ENCODE measurements at regions of chr6 and their contacts with region 1.

Region 1: DNA sequence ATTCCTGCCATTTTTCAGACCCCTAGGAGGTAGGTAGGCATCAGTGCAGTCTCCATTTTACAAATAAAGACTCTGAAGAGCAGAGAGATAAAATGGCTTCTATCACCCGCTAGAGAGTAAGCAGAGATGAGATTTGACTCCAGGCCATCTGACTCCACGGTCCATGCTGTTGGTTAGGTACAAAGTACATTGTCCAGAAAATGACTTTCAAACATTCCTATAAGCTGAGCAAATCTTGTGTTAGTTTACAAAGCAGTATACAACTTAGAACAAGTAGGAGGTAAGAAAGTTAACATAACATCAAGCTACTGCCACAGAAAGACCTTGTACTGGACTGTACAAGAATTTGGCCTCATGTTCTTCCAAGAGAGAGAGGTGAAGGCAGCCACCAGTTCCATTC is 14.9 kb downstream of the BTN1A1 start:
- DNase-seq: no peak
- CTCF ChIP-seq: no peak

Region 2: DNA sequence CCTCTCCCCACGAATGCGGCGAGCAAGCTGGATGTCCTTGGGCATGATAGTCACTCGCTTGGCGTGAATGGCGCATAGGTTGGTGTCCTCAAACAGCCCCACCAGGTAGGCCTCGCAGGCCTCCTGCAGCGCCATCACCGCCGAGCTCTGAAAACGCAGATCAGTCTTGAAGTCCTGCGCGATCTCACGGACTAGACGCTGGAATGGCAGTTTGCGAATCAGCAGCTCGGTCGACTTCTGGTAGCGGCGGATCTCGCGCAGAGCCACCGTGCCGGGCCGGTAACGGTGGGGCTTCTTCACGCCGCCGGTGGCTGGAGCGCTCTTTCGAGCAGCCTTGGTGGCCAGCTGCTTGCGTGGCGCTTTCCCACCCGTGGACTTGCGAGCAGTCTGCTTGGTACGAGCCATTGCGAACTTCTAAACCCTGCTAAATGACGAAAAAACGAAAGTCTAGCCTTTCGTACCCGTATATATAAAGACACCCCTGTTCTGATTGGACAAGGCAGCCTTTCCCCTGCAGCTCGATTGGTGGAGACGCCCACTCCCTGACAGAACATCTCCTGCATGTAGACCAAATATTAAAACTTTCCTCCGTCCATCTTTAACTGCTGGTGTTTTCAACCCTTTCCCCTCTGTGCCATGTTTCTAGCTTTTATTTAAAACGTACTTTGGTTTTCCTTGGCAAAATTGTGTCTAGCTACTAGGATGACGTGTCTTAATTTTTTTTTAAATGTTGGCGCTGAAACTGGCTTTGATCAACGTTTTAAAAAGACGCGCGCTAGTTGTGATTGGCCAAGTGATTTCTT is 317.9 kb before region 1 on chr6:
- CTCF ChIA-PET with region 1: no interaction called
- POLR2A ChIA-PET with region 1: no interaction called
- DNase-seq: peak; percentile 87
- CTCF ChIP-seq: peak; percentile 11

Region 3: DNA sequence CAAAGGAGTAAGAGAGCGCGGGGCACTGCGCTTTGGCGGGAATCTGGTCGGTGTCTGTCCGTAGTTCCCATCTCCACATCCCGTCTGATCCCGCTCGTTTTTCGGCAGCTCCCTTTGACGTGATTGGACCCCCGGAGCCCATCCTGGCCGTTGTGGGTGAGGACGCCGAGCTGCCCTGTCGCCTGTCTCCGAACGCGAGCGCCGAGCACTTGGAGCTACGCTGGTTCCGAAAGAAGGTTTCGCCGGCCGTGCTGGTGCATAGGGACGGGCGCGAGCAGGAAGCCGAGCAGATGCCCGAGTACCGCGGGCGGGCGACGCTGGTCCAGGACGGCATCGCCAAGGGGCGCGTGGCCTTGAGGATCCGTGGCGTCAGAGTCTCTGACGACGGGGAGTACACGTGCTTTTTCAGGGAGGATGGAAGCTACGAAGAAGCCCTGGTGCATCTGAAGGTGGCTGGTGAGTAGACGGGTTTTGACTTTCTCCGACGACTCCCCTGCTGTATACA is 13.4 kb before region 1 on chr6:
- CTCF ChIA-PET with region 1: interaction called, 10 read pairs
- POLR2A ChIA-PET with region 1: no interaction called
- DNase-seq: peak; percentile 31
- CTCF ChIP-seq: no peak